Activated T-helper 1 cell treated with anti-CD3 and anti-CD28 coated beads, Interleukin-12 subunit alpha, Interleukin-12 subunit beta, Interleukin-2, Interleukin-4 antibody, amounts not matched to agents 30 ng/mL and 10 ng/mL and 1 ng/mL, durations not matched to agents 14 hours and 24 hours and 36 hours (primary cell): ENCODE measurements at regions of chrX and their contacts with region 1.

Region 1: DNA sequence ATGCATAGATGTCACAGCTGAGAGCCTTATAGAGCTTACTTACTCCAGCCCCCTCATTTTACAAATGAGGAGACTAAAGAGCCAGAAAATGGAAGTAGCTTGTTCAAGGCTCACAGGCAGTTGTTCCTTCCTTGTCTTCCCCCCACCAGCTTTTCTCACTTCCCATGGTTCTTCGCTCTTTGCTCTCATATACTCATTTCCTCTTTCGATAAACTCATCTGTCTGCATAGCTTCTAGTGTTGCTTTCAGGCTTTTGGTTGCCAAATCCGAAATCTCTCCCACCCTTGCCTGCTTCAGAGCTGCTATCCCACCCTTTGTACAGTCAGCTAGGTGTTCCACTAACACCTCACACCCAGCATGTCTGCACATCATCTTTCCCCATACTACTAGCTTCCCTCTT is 25.0 kb upstream of the GJB1 start:
- DNase-seq: no peak
- H3K4me3 Mint-ChIP-seq: peak overlapping the region; percentile 94
- H3K27ac Mint-ChIP-seq: peak overlapping the region; percentile 92
- H3K4me1 Mint-ChIP-seq: peaks cover 21% of the 10 kb centered on the region
- H3K27me3 Mint-ChIP-seq: no peaks in the 10 kb centered on the region

Region 2: DNA sequence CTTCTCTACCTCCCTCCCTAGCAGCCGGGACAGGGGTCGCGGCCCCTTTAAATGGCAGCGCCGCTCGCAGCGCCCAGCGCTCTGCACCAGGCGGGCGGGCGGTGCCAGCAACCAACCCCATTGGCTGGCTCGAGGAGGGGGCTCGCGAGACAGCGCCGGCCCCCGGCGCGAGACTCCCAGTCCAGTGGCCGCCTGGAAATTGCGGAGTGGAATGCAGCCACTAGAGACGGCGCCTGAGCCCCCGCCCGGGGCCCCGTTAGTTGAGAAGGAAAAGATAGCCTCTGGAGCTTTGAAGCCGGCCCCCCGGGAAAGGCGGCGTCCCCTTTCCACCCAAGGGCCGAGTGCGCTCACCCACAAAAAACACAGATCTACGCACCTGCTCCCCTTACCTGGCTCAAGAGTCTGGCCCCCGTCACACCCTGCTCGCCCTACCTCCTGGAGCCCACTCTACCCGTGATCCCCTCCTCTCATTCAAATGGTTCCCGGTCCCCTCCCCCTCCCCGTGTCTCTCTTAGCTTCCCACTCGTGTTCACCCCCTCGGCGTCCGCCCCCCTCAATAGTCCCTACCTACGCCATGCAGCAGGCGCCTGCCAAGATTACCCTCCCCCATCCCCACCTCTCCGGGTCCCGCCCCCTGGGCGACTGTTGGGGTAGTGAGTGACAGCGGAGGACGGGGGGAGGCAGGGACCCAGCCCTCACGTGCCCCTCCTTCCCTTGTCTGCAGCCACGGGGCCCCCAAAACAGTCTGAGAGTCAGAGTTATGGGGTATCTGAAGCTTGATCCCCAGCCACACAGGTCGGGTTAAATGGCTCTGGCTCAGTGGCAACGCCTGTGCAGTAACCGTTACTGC is 56.3 kb after region 1 on chrX and contains the start of gene ZMYM3:
- intact Hi-C with region 1: loop called (anchors 2 kb)
- DNase-seq: peak; percentile 69
- H3K4me3 Mint-ChIP-seq: peak within 1 kb of the TSS; percentile 88
- H3K27ac Mint-ChIP-seq: peak within 1 kb of the TSS; percentile 71
- H3K4me1 Mint-ChIP-seq: peaks cover 30% of the 10 kb centered on the region
- H3K27me3 Mint-ChIP-seq: no peaks in the 10 kb centered on the region
- total RNA-seq, gene ZMYM3: 12.6 and 13.2 TPM in 2 replicates